AG04450 (cell line): ENCODE measurements at regions of chr2 and their contacts with region 1.

Region 1: DNA sequence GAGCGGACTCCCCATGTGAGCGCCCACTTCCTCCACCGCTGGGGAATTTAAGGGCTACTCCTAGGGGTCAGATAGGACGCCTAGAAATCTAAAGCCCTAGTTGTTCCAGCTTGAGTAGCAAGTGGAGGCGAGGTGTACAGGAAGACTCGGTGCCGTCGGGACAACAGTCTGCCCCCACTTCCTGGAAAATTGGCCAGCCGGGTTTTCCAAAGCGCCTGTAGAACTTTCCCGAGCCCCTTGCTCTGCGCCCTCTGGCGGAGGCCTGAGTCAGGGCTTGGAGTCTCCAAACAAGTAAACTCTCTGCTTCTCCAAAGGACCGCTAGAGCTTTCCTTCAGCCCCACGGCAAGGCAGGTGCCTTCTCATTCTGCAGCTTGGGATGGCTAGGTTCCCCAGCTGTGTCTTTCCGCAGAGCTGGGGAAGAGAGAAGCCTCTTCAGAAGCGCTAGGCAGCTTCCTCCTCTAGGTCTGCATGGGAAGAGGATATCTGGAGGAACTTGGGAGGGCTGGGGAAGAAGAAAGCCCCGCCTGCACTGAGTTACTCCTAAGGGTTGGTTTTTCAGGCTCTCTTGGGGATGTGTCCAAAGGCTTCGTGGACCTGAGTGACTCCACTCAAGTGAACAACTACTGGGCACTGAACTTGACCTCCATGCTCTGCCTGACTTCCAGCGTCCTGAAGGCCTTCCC is 688 bp downstream of the SPR start:
- DNase-seq: peak; percentile 68
- H3K4me3 ChIP-seq: peak overlapping the region; percentile 71
- H3K27ac ChIP-seq: peak overlapping the region; percentile 52
- H3K27me3 ChIP-seq: peaks cover 2% of the 10 kb centered on the region
- CTCF ChIP-seq: peak; percentile 99

Region 2: DNA sequence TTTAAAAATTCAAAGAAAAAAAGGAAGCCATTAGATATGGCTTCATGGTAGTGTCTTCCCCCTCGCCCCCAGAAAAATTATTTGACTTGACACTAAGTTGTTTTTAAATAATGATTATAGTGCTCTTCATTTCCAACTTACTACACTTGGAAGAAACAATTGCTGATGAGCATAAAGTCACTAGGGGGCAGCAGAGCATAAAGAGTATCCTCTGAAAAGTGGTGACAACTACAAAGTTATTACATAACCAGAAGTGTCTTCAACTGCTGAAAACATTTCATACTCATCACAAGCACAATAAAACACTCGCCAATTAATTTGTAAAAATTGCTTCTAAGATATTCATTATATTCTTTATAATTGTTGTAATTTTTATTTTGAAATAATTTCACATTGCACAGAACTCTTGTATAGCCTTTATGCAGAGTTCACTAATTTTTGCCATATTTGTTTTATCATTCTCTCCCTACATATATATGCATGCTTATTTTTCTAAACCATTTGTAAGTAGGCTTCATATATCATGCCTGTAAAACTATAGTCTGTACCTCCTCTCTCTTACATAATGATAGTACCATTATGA is 116.9 kb before region 1 on chr2:
- CTCF ChIA-PET with region 1: interaction called, 31 read pairs
- POLR2A ChIA-PET with region 1: no interaction called
- DNase-seq: peak; percentile 48
- H3K4me3 ChIP-seq: no peak overlapping the region
- H3K27ac ChIP-seq: no peak overlapping the region
- H3K27me3 ChIP-seq: no peaks in the 10 kb centered on the region
- CTCF ChIP-seq: peak; percentile 83

Region 3: GRCh38 chr2:72851321-72851720 is 36.6 kb before region 1 on chr2:
- CTCF ChIA-PET with region 1: no interaction called
- POLR2A ChIA-PET with region 1: no interaction called
- DNase-seq: no peak
- H3K4me3 ChIP-seq: no peak overlapping the region
- H3K27ac ChIP-seq: no peak overlapping the region
- H3K27me3 ChIP-seq: peaks cover 55% of the 10 kb centered on the region
- CTCF ChIP-seq: no peak

Region 4: GRCh38 chr2:72908741-72909140 is 20.8 kb after region 1 on chr2:
- CTCF ChIA-PET with region 1: interaction called, 28 read pairs
- POLR2A ChIA-PET with region 1: no interaction called
- DNase-seq: no peak
- H3K4me3 ChIP-seq: no peak overlapping the region
- H3K27ac ChIP-seq: no peak overlapping the region
- H3K27me3 ChIP-seq: peaks cover 59% of the 10 kb centered on the region
- CTCF ChIP-seq: no peak

Region 5: DNA sequence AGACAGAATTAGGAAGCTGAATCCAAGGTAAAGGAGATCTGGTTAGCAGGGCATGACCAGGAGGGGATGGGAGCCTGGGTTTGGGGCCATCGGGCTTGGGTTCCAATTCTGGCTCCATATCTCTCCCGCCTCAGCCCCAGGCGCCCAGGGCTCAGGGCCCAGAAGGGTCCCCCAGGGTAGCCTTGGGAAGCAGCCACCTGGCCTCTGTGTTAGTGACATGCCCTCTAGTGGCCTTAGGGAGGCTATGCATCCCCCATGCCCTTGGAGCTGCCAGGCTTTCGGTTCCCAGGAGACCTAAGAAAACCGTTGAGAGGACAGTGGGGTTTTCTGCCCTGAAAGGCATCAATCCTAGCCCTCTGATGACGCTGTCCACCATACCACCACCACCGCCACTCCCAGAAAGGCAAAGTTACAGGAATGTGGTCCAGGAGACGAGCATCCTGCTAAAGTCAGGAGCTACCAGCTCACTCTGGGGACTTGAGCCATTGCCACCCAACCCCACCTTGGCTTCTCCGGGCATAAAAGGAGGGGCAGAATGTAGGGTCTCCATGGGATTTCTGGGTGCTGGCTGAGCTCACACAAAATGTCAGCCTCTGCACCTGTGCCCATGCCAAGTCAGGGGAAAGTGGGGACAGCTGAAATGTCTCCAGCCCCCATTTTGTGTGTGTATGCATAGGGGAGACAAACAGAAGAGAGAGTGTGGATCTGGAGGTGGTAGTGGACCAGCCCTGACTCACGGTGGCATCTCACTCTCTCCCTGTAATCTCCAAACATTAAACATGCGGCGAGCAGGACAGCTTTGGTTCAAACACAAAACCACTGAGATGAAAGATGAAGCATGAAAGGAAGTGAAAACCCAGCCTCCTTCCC is 85.9 kb after region 1 on chr2:
- CTCF ChIA-PET with region 1: interaction called, 222 read pairs
- POLR2A ChIA-PET with region 1: interaction called, 3 read pairs
- DNase-seq: peak; percentile 24
- H3K4me3 ChIP-seq: no peak overlapping the region
- H3K27ac ChIP-seq: no peak overlapping the region
- H3K27me3 ChIP-seq: no peaks in the 10 kb centered on the region
- CTCF ChIP-seq: peak; percentile 95

Region 6: DNA sequence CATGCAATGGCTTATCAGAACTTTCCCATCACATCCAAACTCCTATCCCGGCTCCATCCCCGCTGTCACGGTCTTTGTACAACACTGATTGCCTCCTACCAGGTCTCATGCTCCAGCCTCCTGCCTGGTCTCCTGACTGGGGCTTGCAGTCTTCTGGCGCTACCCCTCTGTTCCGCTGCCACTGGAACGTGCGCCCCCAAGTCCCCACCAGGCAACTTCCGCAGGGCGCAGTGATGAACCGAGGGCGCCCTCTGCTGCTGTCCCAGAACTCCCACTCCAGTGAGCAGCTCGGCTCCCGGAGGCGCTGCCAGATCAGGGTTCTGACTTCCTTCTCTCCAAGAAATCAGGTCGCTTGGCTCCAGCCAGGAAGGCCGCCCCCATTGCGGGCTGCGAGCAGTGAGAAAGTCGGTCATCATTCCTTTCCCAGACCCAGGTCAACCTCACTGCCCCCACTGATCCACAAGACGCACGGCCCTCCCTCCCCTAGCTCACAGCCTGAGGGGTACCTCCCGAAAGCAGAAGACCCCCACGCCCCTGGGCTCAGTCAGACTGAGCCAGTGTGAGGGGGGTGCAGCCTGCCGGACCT is 268.7 kb after region 1 on chr2:
- CTCF ChIA-PET with region 1: interaction called, 40 read pairs
- POLR2A ChIA-PET with region 1: no interaction called
- DNase-seq: no peak
- H3K4me3 ChIP-seq: peak overlapping the region; percentile 44
- H3K27ac ChIP-seq: no peak overlapping the region
- H3K27me3 ChIP-seq: peaks cover 11% of the 10 kb centered on the region
- CTCF ChIP-seq: peak; percentile 87

Region 7: GRCh38 chr2:73212448-73213176 is 324.7 kb after region 1 on chr2:
- CTCF ChIA-PET with region 1: interaction called, 44 read pairs
- POLR2A ChIA-PET with region 1: no interaction called
- DNase-seq: peak; percentile 55
- H3K4me3 ChIP-seq: no peak overlapping the region
- H3K27ac ChIP-seq: no peak overlapping the region
- H3K27me3 ChIP-seq: peaks cover 4% of the 10 kb centered on the region
- CTCF ChIP-seq: peak; percentile 90